ENCODE measurements at regions of chrX and their contacts with region 1.

Region 1: GRCh38 chrX:18674788-18675735 is 3.2 kb upstream of the RS1 start:
- DNase-seq: peak; percentile 76 to 89 (median 87)
- ATAC-seq: peak; percentile 96
- H3K4me3 ChIP-seq: peak overlapping the region; percentile 63
- H3K4me3 Mint-ChIP-seq: peak overlapping the region; percentile 74 to 87 (median 80)
- H3K27ac ChIP-seq: peak overlapping the region; percentile 82
- H3K27ac Mint-ChIP-seq: peak overlapping the region; percentile 71 to 95 (median 85)
- H3K4me1 ChIP-seq: no peaks in the 10 kb centered on the region
- H3K4me1 Mint-ChIP-seq: peaks cover 0 to 15% (median 8%) of the 10 kb centered on the region in 7 donors
- H3K27me3 ChIP-seq: no peaks in the 10 kb centered on the region
- H3K27me3 Mint-ChIP-seq: no peaks in the 10 kb centered on the region

Region 2: DNA sequence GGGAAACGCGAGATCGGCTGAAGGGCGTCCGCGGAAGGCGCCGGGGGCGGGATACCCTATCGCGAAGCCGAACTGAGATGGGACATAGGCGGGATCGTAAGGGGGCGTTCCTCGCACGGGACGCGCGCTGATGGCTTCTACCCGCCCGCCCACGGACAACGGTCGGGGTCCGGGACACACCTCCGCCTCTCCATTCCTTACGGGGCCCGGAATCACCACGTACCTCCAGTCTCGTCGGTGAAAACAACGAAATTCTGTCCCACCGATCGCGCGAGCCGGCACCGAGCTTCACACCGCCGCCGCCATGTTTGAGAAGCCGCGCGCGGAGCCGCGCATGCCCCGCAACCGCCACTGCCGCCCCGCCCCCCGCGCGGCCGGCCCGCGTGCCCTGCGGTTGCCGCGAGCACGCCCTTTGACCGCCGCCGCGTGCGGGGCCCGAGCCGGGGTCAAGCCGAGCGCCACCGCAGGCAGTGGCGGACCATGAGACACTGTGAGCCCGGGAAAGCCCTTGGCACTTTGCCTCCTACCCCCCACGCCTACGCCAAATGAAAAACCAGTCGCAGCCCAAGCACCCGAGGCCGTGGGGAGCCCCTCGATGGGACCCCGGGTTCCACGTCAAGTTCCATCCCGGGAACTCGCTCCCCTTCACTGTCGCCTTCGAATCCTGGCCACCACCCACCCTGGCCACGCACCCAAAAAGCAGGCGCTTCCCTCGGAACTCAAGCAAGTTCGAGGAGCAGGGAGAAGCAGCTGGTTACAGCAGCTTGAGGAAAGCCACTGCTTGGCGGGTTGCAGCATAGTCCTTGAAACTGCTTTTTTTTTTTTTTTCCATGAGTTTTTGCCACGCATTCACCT is 320.5 kb before region 1 on chrX and contains the start of gene SCML2:
- CTCF ChIA-PET with region 1: no interaction called
- POLR2A ChIA-PET with region 1: no interaction called
- intact Hi-C with region 1: loop called in 1 of 2 experiments (anchors 2 kb)
- DNase-seq: peak; percentile 3 to 48 (median 23)
- ATAC-seq: peak; percentile 78
- H3K4me3 ChIP-seq: peak within 1 kb of the TSS; percentile 35
- H3K4me3 Mint-ChIP-seq: peak within 1 kb of the TSS; percentile 71 to 88 (median 82)
- H3K27ac ChIP-seq: no peak within 1 kb of the TSS
- H3K27ac Mint-ChIP-seq: peak within 1 kb of the TSS in 2 of 9 donors; percentile 52 to 59
- H3K4me1 ChIP-seq: peaks cover 0 to 4% of the 10 kb centered on the region in 2 donors
- H3K4me1 Mint-ChIP-seq: peaks cover 0 to 10% (median 5%) of the 10 kb centered on the region in 7 donors
- H3K27me3 ChIP-seq: peaks cover 0 to 5% of the 10 kb centered on the region in 2 donors
- H3K27me3 Mint-ChIP-seq: peaks cover 0 to 48% (median 2%) of the 10 kb centered on the region in 5 donors
- total RNA-seq, gene SCML2: 0.96 to 2.2 (median 1.4) TPM

Region 3: GRCh38 chrX:18886344-18887161 is 211.5 kb after region 1 on chrX:
- CTCF ChIA-PET with region 1: no interaction called
- POLR2A ChIA-PET with region 1: no interaction called
- intact Hi-C with region 1: loop called (anchors 1 to 5 kb)
- DNase-seq: peak; percentile 10 to 47 (median 40)
- ATAC-seq: peak; percentile 79
- H3K4me3 ChIP-seq: peak overlapping the region; percentile 56
- H3K4me3 Mint-ChIP-seq: peak overlapping the region; percentile 84 to 97 (median 90)
- H3K27ac ChIP-seq: peak overlapping the region; percentile 57
- H3K27ac Mint-ChIP-seq: peak overlapping the region; percentile 71 to 95 (median 90)
- H3K4me1 ChIP-seq: peaks cover 6 to 23% of the 10 kb centered on the region in 2 donors
- H3K4me1 Mint-ChIP-seq: peaks cover 11 to 47% (median 37%) of the 10 kb centered on the region in 7 donors
- H3K27me3 ChIP-seq: no peaks in the 10 kb centered on the region
- H3K27me3 Mint-ChIP-seq: no peaks in the 10 kb centered on the region

Region 4: GRCh38 chrX:19075754-19076153 is 400.7 kb after region 1 on chrX:
- CTCF ChIA-PET with region 1: no interaction called
- POLR2A ChIA-PET with region 1: no interaction called
- intact Hi-C with region 1: no loop called
- DNase-seq: no peak
- ATAC-seq: no peak
- H3K4me3 ChIP-seq: no peak overlapping the region
- H3K4me3 Mint-ChIP-seq: no peak overlapping the region
- H3K27ac ChIP-seq: no peak overlapping the region
- H3K27ac Mint-ChIP-seq: no peak overlapping the region
- H3K4me1 ChIP-seq: no peaks in the 10 kb centered on the region
- H3K4me1 Mint-ChIP-seq: no peaks in the 10 kb centered on the region
- H3K27me3 ChIP-seq: no peaks in the 10 kb centered on the region
- H3K27me3 Mint-ChIP-seq: peaks cover 0 to 4% (median 0%) of the 10 kb centered on the region in 5 donors

Region 5: DNA sequence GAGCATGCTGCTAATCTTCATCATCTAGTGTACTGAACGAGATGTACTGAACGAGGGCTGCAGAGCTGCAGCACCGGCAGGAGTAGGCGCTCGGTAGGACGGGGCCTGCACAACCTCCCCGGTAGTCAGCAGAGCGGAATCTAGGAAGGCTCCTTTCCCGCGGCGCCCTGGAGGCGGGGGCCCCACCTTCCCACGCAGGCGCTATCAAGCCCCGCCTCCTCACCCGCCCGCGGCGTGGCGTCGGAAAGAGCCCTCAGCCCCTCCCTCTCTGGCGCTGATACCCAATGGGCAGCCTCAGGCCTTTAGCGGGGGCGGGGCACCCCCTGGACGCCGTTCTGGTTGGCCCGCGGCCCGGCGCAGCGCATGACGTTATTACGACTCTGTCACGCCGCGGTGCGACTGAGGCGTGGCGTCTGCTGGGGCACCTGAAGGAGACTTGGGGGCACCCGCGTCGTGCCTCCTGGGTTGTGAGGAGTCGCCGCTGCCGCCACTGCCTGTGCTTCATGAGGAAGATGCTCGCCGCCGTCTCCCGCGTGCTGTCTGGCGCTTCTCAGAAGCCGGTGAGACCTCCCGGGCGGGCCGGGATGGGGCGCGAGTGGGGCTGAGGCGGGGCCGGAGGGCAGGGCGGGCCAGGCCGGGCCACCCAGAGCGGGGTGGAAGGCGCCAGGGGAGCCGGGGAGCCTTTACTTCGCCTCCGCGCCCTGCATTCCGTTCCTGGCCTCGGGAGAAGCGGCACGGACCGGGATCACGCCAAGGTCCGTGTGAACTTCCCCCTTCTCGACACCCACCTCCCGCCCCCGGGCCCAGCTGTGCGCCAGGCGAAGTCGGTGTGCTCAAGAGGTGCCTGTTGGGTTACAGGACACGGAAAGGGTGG is 668.7 kb after region 1 on chrX and contains the start of gene PDHA1:
- CTCF ChIA-PET with region 1: no interaction called
- POLR2A ChIA-PET with region 1: no interaction called
- intact Hi-C with region 1: loop called (anchors 1 to 10 kb)
- DNase-seq: peak; percentile 73 to 94 (median 91)
- ATAC-seq: peak; percentile 99
- H3K4me3 ChIP-seq: peak within 1 kb of the TSS; percentile 71
- H3K4me3 Mint-ChIP-seq: peak within 1 kb of the TSS; percentile 79 to 90 (median 87)
- H3K27ac ChIP-seq: peak within 1 kb of the TSS; percentile 86
- H3K27ac Mint-ChIP-seq: peak within 1 kb of the TSS; percentile 82 to 95 (median 89)
- H3K4me1 ChIP-seq: peaks cover 6 to 9% of the 10 kb centered on the region in 2 donors
- H3K4me1 Mint-ChIP-seq: peaks cover 0 to 28% (median 14%) of the 10 kb centered on the region in 7 donors
- H3K27me3 ChIP-seq: no peaks in the 10 kb centered on the region
- H3K27me3 Mint-ChIP-seq: no peaks in the 10 kb centered on the region
- total RNA-seq, gene PDHA1: 113 to 123 (median 119) TPM

Region 6: DNA sequence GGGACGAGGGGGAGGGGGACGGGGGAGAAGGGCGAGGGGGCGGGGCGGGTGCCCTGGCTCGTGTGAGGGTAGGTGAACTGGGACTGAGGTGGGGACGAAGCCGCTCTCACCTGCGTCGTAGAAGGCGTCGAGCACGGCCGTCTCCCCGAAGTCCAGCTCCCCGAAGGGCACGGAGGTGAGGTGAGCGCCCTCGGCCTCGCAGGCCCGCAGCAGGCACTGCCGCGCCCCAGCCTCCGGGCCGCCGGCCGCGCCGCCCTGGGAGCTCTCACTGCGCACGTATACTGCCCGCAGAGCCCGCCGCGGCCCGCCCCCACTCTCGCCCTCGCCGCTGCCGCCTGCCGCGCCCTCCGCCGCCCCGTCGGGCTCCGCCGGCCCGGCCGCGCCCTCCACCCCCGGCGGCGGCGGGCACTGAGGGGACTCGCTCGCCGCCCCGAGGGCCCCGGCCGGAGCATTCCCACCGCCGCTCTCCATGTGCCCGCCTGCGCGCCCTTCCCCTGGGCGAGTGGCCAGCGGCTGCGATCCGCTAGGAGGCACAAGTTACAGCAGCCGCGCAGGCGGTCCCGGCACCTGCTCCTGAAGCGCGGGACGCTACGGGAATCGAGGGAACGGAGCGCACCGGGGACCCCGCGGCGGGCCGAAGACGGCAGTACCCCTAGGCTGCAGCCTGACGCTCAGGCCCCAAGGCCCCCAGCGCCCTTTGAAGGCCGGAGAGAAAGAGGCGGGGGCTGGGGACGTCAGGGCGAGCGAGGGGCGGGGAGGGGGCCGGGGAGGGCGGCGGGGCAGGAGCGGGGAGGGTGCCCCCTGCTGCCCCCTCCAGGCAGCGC is 839.9 kb after region 1 on chrX and contains the start of gene MAP3K15:
- CTCF ChIA-PET with region 1: no interaction called
- POLR2A ChIA-PET with region 1: no interaction called
- intact Hi-C with region 1: loop called in 1 of 2 experiments (anchors 10 kb)
- DNase-seq: peak in 3 of 9 donors; percentile 7 to 33 (median 9)
- ATAC-seq: peak; percentile 57
- H3K4me3 ChIP-seq: no peak within 1 kb of the TSS
- H3K4me3 Mint-ChIP-seq: peak within 1 kb of the TSS; percentile 27 to 72 (median 59)
- H3K27ac ChIP-seq: no peak within 1 kb of the TSS
- H3K27ac Mint-ChIP-seq: no peak within 1 kb of the TSS
- H3K4me1 ChIP-seq: no peaks in the 10 kb centered on the region
- H3K4me1 Mint-ChIP-seq: peaks cover 0 to 7% (median 0%) of the 10 kb centered on the region in 7 donors
- H3K27me3 ChIP-seq: no peaks in the 10 kb centered on the region
- H3K27me3 Mint-ChIP-seq: peaks cover 4 to 37% (median 25%) of the 10 kb centered on the region in 5 donors
- total RNA-seq, gene MAP3K15: 0.10 TPM in 1 of 5 experiments, not detected in the others

Region 7: DNA sequence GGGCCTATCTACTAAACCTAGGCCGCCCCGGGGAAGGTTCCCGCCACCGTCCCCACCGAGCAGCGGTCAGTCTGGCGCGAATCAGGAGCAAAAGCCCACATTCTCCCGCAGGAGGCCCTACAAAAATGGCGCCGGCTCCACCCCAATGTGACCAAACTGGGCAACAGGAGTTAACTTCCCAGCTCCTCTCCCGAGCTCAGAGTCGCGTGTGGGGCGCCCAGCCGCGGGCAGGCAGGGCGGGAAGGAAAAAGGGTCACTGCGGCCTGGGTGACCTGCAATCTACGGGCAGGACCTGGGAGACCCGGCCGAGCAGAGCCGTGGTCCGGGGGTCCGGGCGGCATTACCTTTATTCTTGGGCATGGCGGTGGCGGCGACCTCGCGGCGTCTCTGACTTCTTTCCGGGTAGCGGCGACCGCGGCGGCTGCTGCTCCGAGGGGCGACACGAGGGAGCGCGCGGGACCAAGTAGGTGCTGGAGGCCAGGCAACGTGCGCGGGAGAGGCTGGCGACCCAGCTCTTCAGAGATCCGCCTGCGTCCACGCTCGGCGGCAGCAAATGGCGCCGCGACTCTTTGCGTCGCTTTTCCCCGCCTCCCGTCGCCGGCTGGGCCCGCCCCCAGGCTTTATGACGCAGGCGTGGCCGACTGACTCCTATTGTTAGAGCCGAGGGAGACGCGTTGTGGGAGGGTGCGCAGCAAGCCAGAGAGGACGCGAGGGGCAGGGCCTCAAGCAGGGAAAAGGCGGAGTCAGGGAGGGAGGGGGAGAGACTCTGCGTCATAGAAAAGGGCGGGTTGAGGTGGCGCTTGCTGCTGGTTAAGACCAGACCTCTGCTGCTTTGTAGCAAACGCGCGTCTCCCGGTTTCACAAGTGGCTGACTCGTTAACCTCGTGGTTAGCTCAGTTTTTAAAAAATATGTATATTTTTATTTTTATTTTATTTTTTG is 1466.5 kb after region 1 on chrX and contains the start of gene EIF1AX:
- CTCF ChIA-PET with region 1: no interaction called
- POLR2A ChIA-PET with region 1: no interaction called
- intact Hi-C with region 1: loop called in 1 of 2 experiments (anchors 2 kb)
- DNase-seq: peak; percentile 82 to 100 (median 98)
- ATAC-seq: peak; percentile 99
- H3K4me3 ChIP-seq: peak within 1 kb of the TSS; percentile 84
- H3K4me3 Mint-ChIP-seq: peak within 1 kb of the TSS; percentile 80 to 96 (median 88)
- H3K27ac ChIP-seq: peak within 1 kb of the TSS; percentile 93
- H3K27ac Mint-ChIP-seq: peak within 1 kb of the TSS; percentile 68 to 97 (median 89)
- H3K4me1 ChIP-seq: peaks cover 8 to 13% of the 10 kb centered on the region in 2 donors
- H3K4me1 Mint-ChIP-seq: peaks cover 4 to 42% (median 27%) of the 10 kb centered on the region in 7 donors
- H3K27me3 ChIP-seq: no peaks in the 10 kb centered on the region
- H3K27me3 Mint-ChIP-seq: no peaks in the 10 kb centered on the region
- total RNA-seq, gene EIF1AX: 40.2 to 67.5 (median 51.6) TPM